MCF 10A (cell line): ENCODE measurements at regions of chr2 and their contacts with region 1.

Region 1: GRCh38 chr2:166539340-166540162 is 45.5 kb upstream of the SCN7A start:
- DNase-seq: peak; percentile 81
- H3K4me3 Mint-ChIP-seq: no peak overlapping the region
- H3K27ac Mint-ChIP-seq: no peak overlapping the region
- H3K4me1 Mint-ChIP-seq: no peaks in the 10 kb centered on the region
- H3K27me3 Mint-ChIP-seq: peaks cover 72% of the 10 kb centered on the region
- CTCF ChIP-seq: peak; percentile 72

Region 2: GRCh38 chr2:166900700-166901099 is 361.1 kb after region 1 on chr2:
- CTCF ChIA-PET with region 1: interaction called, 3 read pairs
- POLR2A ChIA-PET with region 1: no interaction called
- intact Hi-C with region 1: loop called (anchors 2 kb)
- DNase-seq: peak; percentile 59
- H3K4me3 Mint-ChIP-seq: no peak overlapping the region
- H3K27ac Mint-ChIP-seq: no peak overlapping the region
- H3K4me1 Mint-ChIP-seq: no peaks in the 10 kb centered on the region
- H3K27me3 Mint-ChIP-seq: peaks cover 46% of the 10 kb centered on the region
- CTCF ChIP-seq: peak; percentile 34

Region 3: GRCh38 chr2:167127135-167127534 is 587.6 kb after region 1 on chr2:
- CTCF ChIA-PET with region 1: interaction called, 8 read pairs
- POLR2A ChIA-PET with region 1: no interaction called
- intact Hi-C with region 1: loop called (anchors 10 kb)
- DNase-seq: peak; percentile 47
- H3K4me3 Mint-ChIP-seq: no peak overlapping the region
- H3K27ac Mint-ChIP-seq: no peak overlapping the region
- H3K4me1 Mint-ChIP-seq: no peaks in the 10 kb centered on the region
- H3K27me3 Mint-ChIP-seq: peaks cover 10% of the 10 kb centered on the region
- CTCF ChIP-seq: peak; percentile 27

Region 4: DNA sequence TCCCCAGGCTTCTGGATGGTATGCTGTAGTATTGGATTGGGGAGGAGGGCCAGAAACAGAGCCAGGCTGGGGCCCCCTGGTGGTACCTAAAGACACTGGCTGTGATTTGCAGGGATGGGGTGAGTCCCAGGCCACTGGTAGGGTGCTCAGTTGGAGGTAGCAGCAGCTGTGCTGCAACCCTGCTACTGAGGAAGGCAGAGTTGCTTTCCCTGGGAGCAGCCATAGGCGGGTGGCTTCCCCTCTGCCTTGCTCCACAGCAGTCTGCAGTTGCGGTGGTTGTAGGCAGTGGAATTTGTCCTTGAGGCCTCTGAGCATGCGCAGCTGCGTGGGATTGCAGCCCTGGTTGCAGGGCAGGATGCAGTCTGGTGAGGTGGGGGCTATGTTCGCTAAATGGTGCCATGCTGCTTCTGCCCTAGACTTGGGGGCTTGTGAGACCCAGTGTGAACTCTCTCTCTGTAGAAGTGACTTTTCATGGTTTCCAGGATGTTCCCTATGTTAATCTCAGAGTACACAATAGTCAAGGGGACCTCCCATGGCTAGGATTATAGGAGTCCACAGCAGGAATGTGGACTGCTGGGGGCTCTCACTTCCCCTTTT is 792.2 kb after region 1 on chr2:
- CTCF ChIA-PET with region 1: no interaction called
- POLR2A ChIA-PET with region 1: no interaction called
- intact Hi-C with region 1: loop called (anchors 5 kb)
- DNase-seq: peak; percentile 28
- H3K4me3 Mint-ChIP-seq: no peak overlapping the region
- H3K27ac Mint-ChIP-seq: no peak overlapping the region
- H3K4me1 Mint-ChIP-seq: no peaks in the 10 kb centered on the region
- H3K27me3 Mint-ChIP-seq: peaks cover 69% of the 10 kb centered on the region
- CTCF ChIP-seq: peak; percentile 14